Mammary epithelial cell (primary cell): ENCODE measurements at regions of chr11 and their contacts with region 1.

Region 1: GRCh38 chr11:82698576-82699352 is 34.9 kb downstream of the FAM181B start:
- DNase-seq: no peak
- H3K4me3 ChIP-seq: no peak overlapping the region
- H3K27ac ChIP-seq: no peak overlapping the region
- H3K4me1 ChIP-seq: no peaks in the 10 kb centered on the region
- H3K27me3 ChIP-seq: no peaks in the 10 kb centered on the region
- CTCF ChIP-seq: no peak

Region 2: DNA sequence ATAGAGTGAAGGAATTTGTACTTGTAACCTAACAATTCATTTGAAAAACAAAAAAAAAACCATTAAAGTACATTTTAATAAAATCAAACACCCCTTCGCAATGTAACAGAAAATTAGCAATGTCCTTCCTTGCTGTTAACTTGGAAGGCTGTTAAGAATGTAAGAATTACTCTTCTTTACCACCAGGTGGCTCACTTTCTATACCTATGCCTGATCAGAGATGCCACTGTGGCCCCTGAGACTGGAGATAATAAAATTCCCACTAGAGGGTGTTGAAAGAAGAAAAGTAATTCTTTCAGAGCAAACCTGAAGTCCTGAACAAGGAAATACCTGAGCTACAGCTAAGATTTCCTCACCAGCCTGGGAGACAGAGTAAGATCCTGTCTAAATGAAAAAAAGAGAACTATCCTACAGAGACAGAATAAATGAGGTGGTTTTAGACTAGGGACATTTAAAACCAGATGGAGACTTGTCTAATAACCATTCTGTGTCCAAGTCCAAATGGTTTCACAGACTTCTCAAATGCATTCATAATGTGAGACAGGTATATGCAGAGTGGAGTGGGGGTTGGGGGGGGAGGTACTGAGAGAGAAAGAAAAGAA is 1054.4 kb before region 1 on chr11:
- CTCF ChIA-PET with region 1: no interaction called
- dilution Hi-C with region 1: no loop called
- in situ Hi-C with region 1: loop called in 1 of 2 experiments (anchors 25 kb)
- intact Hi-C with region 1: loop called (anchors 1 kb)
- DNase-seq: peak; percentile 51
- H3K4me3 ChIP-seq: no peak overlapping the region
- H3K27ac ChIP-seq: no peak overlapping the region
- H3K4me1 ChIP-seq: no peaks in the 10 kb centered on the region
- H3K27me3 ChIP-seq: peaks cover 5% of the 10 kb centered on the region
- CTCF ChIP-seq: peak; percentile 63 to 65

Region 3: GRCh38 chr11:81658722-81659121 is 1040.0 kb before region 1 on chr11:
- CTCF ChIA-PET with region 1: no interaction called
- dilution Hi-C with region 1: no loop called
- in situ Hi-C with region 1: no loop called
- intact Hi-C with region 1: loop called (anchors 5 kb)
- DNase-seq: peak; percentile 25
- H3K4me3 ChIP-seq: no peak overlapping the region
- H3K27ac ChIP-seq: no peak overlapping the region
- H3K4me1 ChIP-seq: no peaks in the 10 kb centered on the region
- H3K27me3 ChIP-seq: peaks cover 3% of the 10 kb centered on the region
- CTCF ChIP-seq: peak; percentile 63 to 83

Region 4: GRCh38 chr11:82315093-82315492 is 383.7 kb before region 1 on chr11:
- CTCF ChIA-PET with region 1: no interaction called
- dilution Hi-C with region 1: no loop called
- in situ Hi-C with region 1: loop called in 1 of 2 experiments (anchors 25 kb)
- intact Hi-C with region 1: loop called (anchors 1 kb)
- DNase-seq: peak; percentile 5
- H3K4me3 ChIP-seq: no peak overlapping the region
- H3K27ac ChIP-seq: no peak overlapping the region
- H3K4me1 ChIP-seq: no peaks in the 10 kb centered on the region
- H3K27me3 ChIP-seq: no peaks in the 10 kb centered on the region
- CTCF ChIP-seq: peak; percentile 76 to 77

Region 5: GRCh38 chr11:82494988-82495432 is 203.8 kb before region 1 on chr11:
- CTCF ChIA-PET with region 1: no interaction called
- dilution Hi-C with region 1: no loop called
- in situ Hi-C with region 1: no loop called
- intact Hi-C with region 1: loop called (anchors 2 kb)
- DNase-seq: peak; percentile 4
- H3K4me3 ChIP-seq: no peak overlapping the region
- H3K27ac ChIP-seq: no peak overlapping the region
- H3K4me1 ChIP-seq: no peaks in the 10 kb centered on the region
- H3K27me3 ChIP-seq: no peaks in the 10 kb centered on the region
- CTCF ChIP-seq: peak; percentile 34 to 57

Region 6: DNA sequence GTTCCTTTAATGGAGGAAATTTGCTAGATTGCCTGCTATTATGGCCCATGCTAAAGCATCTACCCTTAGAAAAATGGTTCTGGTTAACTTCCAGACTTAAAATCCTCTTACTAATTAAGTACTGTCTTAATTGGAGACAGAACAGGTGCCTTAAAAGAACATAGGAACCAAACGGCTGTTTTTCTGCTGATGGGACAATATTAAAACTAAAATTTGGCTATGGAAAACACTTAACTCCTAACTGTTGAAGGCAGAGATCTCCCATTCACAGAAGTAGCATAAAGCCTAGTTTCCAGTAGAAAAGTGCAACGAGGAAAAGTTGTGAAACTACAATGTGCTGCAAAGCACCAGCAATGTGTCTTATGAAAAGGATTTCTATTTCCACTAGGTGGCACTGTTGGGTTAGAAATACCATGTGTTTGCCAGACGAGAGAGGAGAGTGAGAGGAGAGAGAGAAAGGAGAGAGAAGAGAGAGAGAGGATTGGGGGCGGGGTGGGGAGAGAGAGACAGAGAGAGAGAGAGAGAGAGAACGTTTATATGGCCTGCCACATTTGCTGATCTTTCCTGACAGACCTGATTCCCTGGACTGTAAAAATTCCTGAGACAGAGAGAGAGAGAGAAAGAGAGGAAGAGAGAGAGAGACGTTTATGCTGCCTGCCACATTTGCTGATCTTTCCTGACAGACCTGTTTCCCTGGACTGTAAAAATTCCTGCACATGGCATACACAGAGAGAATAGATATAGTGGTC is 16.6 kb before region 1 on chr11:
- CTCF ChIA-PET with region 1: interaction called, 4 read pairs
- dilution Hi-C with region 1: no loop called
- in situ Hi-C with region 1: no loop called
- intact Hi-C with region 1: loop called (anchors 1 kb)
- DNase-seq: peak; percentile 62
- H3K4me3 ChIP-seq: no peak overlapping the region
- H3K27ac ChIP-seq: no peak overlapping the region
- H3K4me1 ChIP-seq: no peaks in the 10 kb centered on the region
- H3K27me3 ChIP-seq: peaks cover 7% of the 10 kb centered on the region
- CTCF ChIP-seq: peak; percentile 44 to 66